Activated naive CD8-positive, alpha-beta T cell treated with anti-CD3 and anti-CD28 coated beads, Interleukin-2, amount 10 ng/mL, durations not matched to agents 7 days and 5 days (primary cell): ENCODE measurements at regions of chr11 and their contacts with region 1.

Region 1: GRCh38 chr11:65868076-65868667 is 4.4 kb downstream of the EFEMP2 start:
- DNase-seq: no peak
- ATAC-seq: no peak
- H3K4me3 Mint-ChIP-seq: no peak overlapping the region
- H3K27ac Mint-ChIP-seq: no peak overlapping the region
- H3K4me1 Mint-ChIP-seq: peaks cover 23% of the 10 kb centered on the region
- H3K27me3 Mint-ChIP-seq: no peaks in the 10 kb centered on the region

Region 2: GRCh38 chr11:65850831-65851811 is 17.1 kb before region 1 on chr11:
- POLR2A ChIA-PET with region 1: interaction called, 25 read pairs
- DNase-seq: no peak
- ATAC-seq: peak; percentile 13
- H3K4me3 Mint-ChIP-seq: no peak overlapping the region
- H3K27ac Mint-ChIP-seq: no peak overlapping the region
- H3K4me1 Mint-ChIP-seq: peaks cover 24% of the 10 kb centered on the region
- H3K27me3 Mint-ChIP-seq: peaks cover 3% of the 10 kb centered on the region